Activated CD4-positive, alpha-beta T cell treated with anti-CD3 and anti-CD28 coated beads, Interleukin-2, amount 10 ng/mL, durations not matched to agents 7 days and 5 days (primary cell): ENCODE measurements at regions of chr4 and their contacts with region 1.

Region 1: DNA sequence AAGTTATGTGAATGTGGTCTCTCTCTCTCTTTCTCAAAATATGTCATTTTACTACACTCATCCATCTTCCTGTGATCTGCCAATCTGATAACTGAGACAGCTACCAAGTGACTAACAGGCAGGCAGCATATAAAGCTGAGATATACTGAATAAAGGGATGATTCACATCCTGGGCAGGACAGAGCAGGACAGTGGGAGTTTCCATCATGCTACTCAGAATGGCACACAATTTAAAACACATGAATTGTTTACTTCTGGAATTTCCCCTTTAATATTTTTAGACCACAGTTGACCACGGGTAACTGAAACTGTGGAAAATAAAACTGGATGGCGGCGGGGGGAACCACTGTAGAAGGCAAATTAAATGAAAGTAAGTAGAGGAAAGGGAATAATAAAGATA is 58.6 kb upstream of the DCTD start:
- DNase-seq: no peak
- H3K4me3 Mint-ChIP-seq: no peak overlapping the region
- H3K27ac Mint-ChIP-seq: no peak overlapping the region
- H3K4me1 Mint-ChIP-seq: no peaks in the 10 kb centered on the region
- H3K27me3 Mint-ChIP-seq: peaks cover 13% of the 10 kb centered on the region

Region 2: DNA sequence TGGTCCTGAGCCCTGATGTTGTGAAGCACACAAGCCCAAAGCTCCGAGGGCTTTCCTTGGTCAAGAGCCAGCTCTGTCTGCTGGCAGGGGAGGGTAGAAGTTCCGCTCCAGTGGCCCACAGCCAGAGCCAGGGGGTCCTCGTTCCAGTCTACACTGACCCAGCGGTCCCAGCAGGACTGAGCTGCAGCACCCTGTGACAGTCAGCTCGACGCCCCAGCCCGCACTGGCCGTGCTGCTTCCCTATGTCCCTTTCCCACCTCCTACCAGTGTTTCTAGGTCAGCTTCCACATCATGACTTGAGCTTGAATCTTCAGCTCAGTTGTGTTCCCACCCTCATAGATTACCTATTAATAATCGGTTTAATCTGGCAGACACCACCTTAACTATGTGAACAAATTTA is 36.1 kb before region 1 on chr4:
- CTCF ChIA-PET with region 1: no interaction called
- POLR2A ChIA-PET with region 1: no interaction called
- DNase-seq: no peak
- H3K4me3 Mint-ChIP-seq: no peak overlapping the region
- H3K27ac Mint-ChIP-seq: no peak overlapping the region
- H3K4me1 Mint-ChIP-seq: peaks cover 2% of the 10 kb centered on the region
- H3K27me3 Mint-ChIP-seq: peaks cover 4% of the 10 kb centered on the region

Region 3: DNA sequence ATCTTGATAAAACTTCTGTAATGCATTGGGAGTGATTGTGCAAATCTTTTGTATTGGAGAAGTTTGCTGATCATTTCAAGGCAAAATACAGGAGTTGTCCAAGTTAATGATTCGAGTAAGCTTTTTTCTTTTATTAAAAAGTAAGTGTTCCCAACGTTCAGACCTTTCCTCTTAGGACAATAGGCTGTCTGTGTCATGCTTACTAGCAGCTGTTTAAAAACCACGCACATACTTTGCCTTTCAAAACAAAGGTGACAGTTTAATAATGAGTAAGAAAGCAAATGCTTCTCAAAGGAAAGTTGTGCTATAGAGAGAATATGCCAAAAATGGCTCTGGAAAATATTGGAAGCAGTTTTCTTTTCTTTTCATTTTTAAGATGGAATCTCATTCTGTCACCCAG is 694.4 kb after region 1 on chr4:
- CTCF ChIA-PET with region 1: no interaction called
- POLR2A ChIA-PET with region 1: interaction called, 11 read pairs
- DNase-seq: no peak
- H3K4me3 Mint-ChIP-seq: no peak overlapping the region
- H3K27ac Mint-ChIP-seq: no peak overlapping the region
- H3K4me1 Mint-ChIP-seq: peaks cover 3% of the 10 kb centered on the region
- H3K27me3 Mint-ChIP-seq: no peaks in the 10 kb centered on the region